Heart right ventricle (tissue), 16 donors: ENCODE measurements at regions of chr11 and their contacts with region 1.

Region 1: DNA sequence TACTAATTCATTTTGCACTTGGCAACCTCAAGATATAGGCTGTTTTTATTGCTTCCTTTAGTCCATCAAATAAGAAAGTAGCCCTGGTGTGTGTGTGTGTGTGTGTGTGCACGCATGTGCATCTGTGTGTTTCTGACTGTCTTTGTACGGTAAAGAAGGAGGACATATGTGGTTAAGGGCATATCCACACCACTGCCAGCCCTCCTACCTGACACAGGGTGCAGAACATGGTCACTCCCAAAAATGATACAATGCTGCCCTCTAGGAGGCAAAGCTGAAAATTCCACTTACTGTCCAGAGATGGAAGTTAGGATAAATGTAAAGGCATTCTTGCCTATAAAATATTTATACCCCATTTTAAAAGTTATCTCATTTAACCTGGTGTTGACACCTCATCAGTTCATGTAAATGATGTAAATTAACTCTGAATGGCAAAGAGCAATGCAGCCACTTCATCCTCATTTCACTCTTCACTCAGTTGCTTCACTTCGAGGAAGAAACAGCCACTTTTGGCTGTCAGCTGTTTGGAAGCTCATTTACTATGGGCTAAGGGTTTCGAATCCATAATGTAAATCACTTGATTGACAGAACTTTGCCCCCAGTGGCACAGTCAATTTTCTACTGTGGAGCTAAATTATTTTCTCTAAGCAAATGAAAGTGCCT is 83.1 kb upstream of the MTNR1B start:
- DNase-seq: peak in 1 of 2 donors; percentile 36
- ATAC-seq: peak; percentile 63 to 85 (median 70)
- H3K4me3 ChIP-seq: no peak overlapping the region
- H3K27ac ChIP-seq: no peak overlapping the region
- H3K4me1 ChIP-seq: no peaks in the 10 kb centered on the region
- H3K27me3 ChIP-seq: no peaks in the 10 kb centered on the region
- CTCF ChIP-seq: peak; percentile 34 to 76 (median 64)

Region 2: DNA sequence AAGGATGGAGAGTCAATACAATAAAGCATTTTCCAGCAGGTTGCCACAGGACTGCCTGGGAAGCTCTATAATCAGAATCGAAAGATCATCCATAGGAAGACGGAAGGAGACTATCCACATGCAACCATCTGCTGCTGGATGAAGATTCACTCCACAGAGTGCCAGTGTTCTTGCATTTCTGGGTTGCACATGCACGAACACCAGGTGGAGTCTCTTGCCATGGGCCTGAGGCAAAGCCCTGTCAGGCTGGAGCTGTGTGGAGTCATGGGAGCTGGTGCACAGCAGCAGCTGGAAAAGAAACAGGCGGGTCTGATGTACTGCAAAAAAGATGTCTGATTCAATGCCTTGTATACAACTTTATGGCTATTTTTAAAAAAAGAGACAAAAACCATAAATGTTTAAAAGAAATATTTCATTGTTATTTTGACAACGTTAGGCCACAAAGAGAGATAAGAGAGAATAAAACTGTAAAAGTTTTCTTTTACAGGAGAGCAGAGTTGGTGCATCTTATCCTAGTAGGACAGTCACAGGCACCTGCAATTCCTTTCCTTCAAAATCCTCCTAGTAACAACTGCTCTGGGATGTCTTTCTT is 674.7 kb before region 1 on chr11:
- intact Hi-C with region 1: loop called in 8 of 10 experiments (anchors 5 to 10 kb)
- DNase-seq: peak; percentile 9 to 12
- ATAC-seq: peak in 5 of 8 donors; percentile 48 to 89 (median 75)
- H3K4me3 ChIP-seq: no peak overlapping the region
- H3K27ac ChIP-seq: no peak overlapping the region
- H3K4me1 ChIP-seq: no peaks in the 10 kb centered on the region
- H3K27me3 ChIP-seq: peaks cover 0 to 8% (median 0%) of the 10 kb centered on the region in 7 donors
- CTCF ChIP-seq: peak in 7 of 9 donors; percentile 19 to 53 (median 46)

Region 3: DNA sequence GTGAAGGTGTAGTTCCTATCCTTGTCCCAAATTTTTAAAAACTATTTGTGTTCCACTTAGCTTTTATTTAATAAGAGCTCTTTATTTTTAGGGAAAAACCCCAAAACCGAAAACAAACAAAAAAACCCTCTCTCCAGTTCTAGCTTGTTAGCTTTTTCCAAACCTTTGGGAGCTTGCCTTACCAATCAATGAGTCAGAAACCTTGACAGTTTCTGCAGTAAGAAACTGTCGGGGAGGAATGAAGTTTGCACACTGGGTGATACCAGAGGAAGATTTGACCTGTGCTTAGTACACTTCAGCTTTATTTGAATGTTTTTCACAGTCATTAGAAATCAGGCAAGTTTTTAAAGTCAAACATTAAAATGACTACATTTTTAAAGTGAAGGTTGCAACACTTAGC is 556.7 kb before region 1 on chr11:
- intact Hi-C with region 1: loop called in 1 of 10 experiments (anchors 10 kb)
- DNase-seq: no peak
- ATAC-seq: no peak
- H3K4me3 ChIP-seq: no peak overlapping the region
- H3K27ac ChIP-seq: no peak overlapping the region
- H3K4me1 ChIP-seq: no peaks in the 10 kb centered on the region
- H3K27me3 ChIP-seq: peaks cover 0 to 6% (median 0%) of the 10 kb centered on the region in 7 donors
- CTCF ChIP-seq: no peak

Region 4: GRCh38 chr11:92735039-92735438 is 151.3 kb before region 1 on chr11:
- intact Hi-C with region 1: loop called in 1 of 10 experiments (anchors 5 kb)
- DNase-seq: no peak
- ATAC-seq: no peak
- H3K4me3 ChIP-seq: no peak overlapping the region
- H3K27ac ChIP-seq: no peak overlapping the region
- H3K4me1 ChIP-seq: no peaks in the 10 kb centered on the region
- H3K27me3 ChIP-seq: peaks cover 0 to 4% (median 0%) of the 10 kb centered on the region in 7 donors
- CTCF ChIP-seq: peak in 7 of 9 donors; percentile 17 to 44 (median 40)

Region 5: DNA sequence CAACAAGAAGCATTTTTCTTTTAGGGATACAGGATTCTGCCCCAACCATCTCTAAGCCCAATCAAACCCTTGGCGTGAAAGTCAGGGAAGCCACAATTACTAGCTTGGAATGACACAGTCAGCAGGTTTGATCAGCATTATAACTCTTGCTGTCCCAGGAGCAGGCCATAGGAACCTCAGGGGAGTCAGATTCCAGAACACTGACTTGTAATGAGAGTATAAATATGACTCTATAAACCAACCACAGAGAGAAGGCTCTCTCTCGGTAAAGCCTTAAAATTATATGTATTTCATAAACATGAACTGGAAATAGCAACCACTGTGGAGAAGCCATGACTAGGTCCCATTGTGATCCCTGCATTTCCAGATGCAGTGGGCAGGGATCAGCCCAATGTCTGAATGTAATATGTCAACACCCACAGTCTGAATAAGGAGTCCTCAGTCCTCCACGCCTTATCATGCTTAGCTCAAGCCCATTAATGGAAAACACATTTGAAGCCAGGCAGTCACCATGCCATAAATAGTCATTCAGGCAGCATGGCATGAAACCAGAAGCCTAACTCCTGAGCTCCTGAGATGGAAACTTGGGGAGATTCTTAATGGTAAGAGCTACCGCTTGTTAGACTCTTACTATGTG is 16.1 kb before region 1 on chr11:
- intact Hi-C with region 1: no loop called
- DNase-seq: no peak
- ATAC-seq: peak in 6 of 8 donors; percentile 44 to 67 (median 52)
- H3K4me3 ChIP-seq: no peak overlapping the region
- H3K27ac ChIP-seq: no peak overlapping the region
- H3K4me1 ChIP-seq: peaks cover 0 to 4% (median 0%) of the 10 kb centered on the region in 9 donors
- H3K27me3 ChIP-seq: no peaks in the 10 kb centered on the region
- CTCF ChIP-seq: no peak

Region 6: DNA sequence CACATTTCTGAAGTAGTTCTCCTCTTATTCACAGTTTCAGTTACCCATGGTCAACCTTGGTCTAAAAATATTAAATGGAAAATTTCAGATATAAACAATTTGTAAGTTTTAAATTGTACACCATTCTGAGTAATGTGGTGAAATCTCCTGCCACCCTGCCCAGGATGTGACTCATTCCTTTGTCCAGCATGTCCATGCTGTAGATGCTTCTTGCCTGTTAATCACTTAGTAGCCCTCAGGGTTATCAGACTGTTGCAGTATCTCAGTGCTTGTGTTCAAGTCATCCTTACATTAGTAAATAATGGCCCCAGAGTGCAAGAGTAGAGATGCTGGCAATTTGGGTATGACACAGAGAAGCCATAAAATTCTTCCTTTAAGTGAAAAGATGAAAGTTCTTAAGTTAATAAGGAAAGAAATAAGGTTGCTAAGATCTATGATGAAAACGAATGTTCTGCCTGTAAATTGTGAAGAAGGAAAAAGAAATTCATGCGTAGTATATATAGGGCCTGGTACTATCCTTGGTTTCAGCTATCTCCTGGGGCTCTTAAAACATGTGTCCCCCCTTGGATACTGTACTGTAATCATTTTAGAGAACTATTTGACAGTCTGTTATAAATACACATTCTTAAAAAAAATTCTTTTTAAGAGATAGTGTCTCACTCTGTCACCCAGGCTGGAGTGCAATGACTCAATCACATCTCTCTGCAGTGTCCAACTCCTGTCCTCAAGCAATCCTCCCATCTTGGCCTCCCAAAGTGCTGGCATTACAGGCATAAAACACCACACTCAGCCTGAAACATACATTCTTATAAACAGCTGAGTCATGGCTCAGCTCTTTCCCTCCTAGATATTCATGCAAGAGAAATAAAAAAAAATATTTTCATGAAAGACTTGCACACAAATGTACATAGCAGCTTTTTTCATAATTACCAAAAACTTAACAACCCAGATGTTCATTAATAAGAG is 114.4 kb after region 1 on chr11:
- intact Hi-C with region 1: no loop called
- DNase-seq: no peak
- ATAC-seq: no peak
- H3K4me3 ChIP-seq: no peak overlapping the region
- H3K27ac ChIP-seq: no peak overlapping the region
- H3K4me1 ChIP-seq: no peaks in the 10 kb centered on the region
- H3K27me3 ChIP-seq: no peaks in the 10 kb centered on the region
- CTCF ChIP-seq: no peak